Calu3 (cell line): ENCODE measurements at regions of chr6 and their contacts with region 1.

Region 1: GRCh38 chr6:89970609-89971337 is 76.5 kb downstream of the GJA10 start:
- DNase-seq: peak; percentile 64
- H3K4me3 Mint-ChIP-seq: no peak overlapping the region
- H3K27ac Mint-ChIP-seq: no peak overlapping the region
- H3K4me1 Mint-ChIP-seq: peaks cover 2% of the 10 kb centered on the region
- H3K27me3 Mint-ChIP-seq: no peaks in the 10 kb centered on the region
- CTCF ChIP-seq: peak; percentile 25

Region 2: GRCh38 chr6:89098461-89098860 is 872.3 kb before region 1 on chr6:
- CTCF ChIA-PET with region 1: no interaction called
- intact Hi-C with region 1: no loop called
- DNase-seq: no peak
- H3K4me3 Mint-ChIP-seq: no peak overlapping the region
- H3K27ac Mint-ChIP-seq: no peak overlapping the region
- H3K4me1 Mint-ChIP-seq: no peaks in the 10 kb centered on the region
- H3K27me3 Mint-ChIP-seq: no peaks in the 10 kb centered on the region
- CTCF ChIP-seq: no peak

Region 3: GRCh38 chr6:89805814-89806371 is 164.9 kb before region 1 on chr6:
- CTCF ChIA-PET with region 1: no interaction called
- intact Hi-C with region 1: no loop called
- DNase-seq: no peak
- H3K4me3 Mint-ChIP-seq: no peak overlapping the region
- H3K27ac Mint-ChIP-seq: no peak overlapping the region
- H3K4me1 Mint-ChIP-seq: no peaks in the 10 kb centered on the region
- H3K27me3 Mint-ChIP-seq: no peaks in the 10 kb centered on the region
- CTCF ChIP-seq: no peak

Region 4: GRCh38 chr6:90021711-90022110 is 50.9 kb after region 1 on chr6:
- CTCF ChIA-PET with region 1: no interaction called
- intact Hi-C with region 1: no loop called
- DNase-seq: no peak
- H3K4me3 Mint-ChIP-seq: no peak overlapping the region
- H3K27ac Mint-ChIP-seq: no peak overlapping the region
- H3K4me1 Mint-ChIP-seq: peaks cover 12% of the 10 kb centered on the region
- H3K27me3 Mint-ChIP-seq: no peaks in the 10 kb centered on the region
- CTCF ChIP-seq: no peak

Region 5: DNA sequence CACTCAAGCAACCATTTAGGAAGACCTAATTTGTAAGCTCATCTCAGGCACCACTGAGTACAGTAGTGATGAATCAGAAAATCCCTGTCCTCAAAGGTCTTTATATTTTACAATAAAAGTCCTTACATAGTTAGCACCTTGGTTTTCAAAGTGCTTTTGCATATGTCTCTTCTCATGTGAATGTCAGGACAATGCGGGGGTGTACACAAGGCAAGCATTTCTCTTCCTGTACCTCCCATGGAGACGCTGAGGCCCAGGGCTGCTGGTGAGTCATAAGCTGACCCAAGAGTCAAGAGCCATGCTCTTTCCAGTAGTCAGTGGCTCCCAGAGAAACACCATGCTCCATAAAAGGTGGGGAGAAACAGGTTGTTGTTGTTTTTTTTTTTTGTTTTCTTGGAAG is 97.5 kb after region 1 on chr6:
- CTCF ChIA-PET with region 1: no interaction called
- intact Hi-C with region 1: no loop called
- DNase-seq: peak; percentile 34
- H3K4me3 Mint-ChIP-seq: no peak overlapping the region
- H3K27ac Mint-ChIP-seq: no peak overlapping the region
- H3K4me1 Mint-ChIP-seq: peaks cover 14% of the 10 kb centered on the region
- H3K27me3 Mint-ChIP-seq: no peaks in the 10 kb centered on the region
- CTCF ChIP-seq: no peak

Region 6: DNA sequence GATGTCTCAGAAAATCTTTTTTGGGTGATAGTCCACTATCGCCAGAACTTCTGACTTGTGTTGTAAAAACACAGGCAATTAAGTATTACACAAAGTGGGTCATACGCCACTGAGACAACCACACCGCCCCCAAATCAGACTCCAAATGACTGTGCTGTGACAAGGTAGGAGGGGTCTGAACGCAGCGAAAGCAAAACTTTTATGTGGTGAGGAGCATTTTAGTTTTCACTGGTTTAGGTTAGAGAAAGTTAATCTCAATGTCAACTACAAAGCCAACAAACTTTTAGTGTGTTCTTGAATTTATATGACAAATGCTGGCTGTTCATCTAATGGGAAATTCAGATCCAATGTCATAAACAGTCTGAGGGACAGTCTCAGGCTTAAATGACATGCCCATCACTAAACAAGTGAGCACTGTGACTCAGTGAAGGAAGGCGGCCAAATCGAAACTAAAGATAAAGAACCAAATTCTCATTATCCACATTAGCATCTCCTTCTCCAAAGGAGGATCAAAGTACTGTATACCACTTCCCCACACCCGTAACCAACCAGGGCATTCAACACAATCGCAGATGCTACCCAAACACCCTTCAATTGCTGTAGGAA is 110.2 kb after region 1 on chr6:
- CTCF ChIA-PET with region 1: no interaction called
- intact Hi-C with region 1: loop called (anchors 10 kb)
- DNase-seq: no peak
- H3K4me3 Mint-ChIP-seq: no peak overlapping the region
- H3K27ac Mint-ChIP-seq: no peak overlapping the region
- H3K4me1 Mint-ChIP-seq: no peaks in the 10 kb centered on the region
- H3K27me3 Mint-ChIP-seq: no peaks in the 10 kb centered on the region
- CTCF ChIP-seq: no peak

Region 7: GRCh38 chr6:90184334-90185298 is 213.8 kb after region 1 on chr6:
- CTCF ChIA-PET with region 1: no interaction called
- intact Hi-C with region 1: loop called (anchors 2 kb)
- DNase-seq: peak; percentile 77
- H3K4me3 Mint-ChIP-seq: peak overlapping the region; percentile 39
- H3K27ac Mint-ChIP-seq: peak overlapping the region; percentile 83
- H3K4me1 Mint-ChIP-seq: peaks cover 32% of the 10 kb centered on the region
- H3K27me3 Mint-ChIP-seq: no peaks in the 10 kb centered on the region
- CTCF ChIP-seq: no peak

Region 8: DNA sequence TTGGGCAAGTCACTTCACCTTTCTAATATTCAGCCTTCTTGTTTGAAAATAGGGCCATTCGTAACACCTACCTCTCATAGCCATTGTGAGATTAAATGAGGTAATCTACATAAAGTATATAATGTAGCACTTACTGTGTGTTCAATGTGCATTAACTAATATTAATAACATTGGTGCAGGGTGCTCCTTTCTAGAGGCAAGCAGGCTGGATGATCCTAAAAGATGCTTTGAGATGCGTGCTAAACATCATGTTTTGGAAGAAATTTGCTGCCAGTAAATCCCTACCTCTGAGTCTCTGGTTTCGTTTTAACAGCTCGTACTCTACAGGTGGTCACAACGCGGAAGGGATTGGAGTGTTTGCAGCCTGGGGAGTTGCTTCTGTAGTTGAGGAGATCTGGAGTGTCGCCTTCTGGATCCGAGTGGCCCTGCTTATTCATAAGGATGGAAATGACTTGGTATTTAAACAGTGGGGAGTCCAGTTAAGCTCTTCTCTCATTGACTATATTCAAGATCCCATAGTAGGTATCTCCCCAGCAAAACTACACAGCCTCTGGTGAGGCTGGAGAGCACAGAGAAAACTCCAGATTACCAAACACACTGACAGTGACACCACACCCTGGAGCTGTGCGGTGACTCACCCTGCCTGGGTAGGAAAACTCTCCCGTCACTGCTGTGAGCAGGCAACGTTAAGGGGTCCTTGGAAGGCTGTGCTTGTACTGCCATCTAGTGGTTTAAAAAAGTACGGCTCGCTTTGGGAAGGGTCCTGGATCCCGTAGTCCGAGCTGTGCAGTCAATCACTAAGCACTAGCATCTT is 508.2 kb after region 1 on chr6:
- CTCF ChIA-PET with region 1: interaction called, 6 read pairs
- intact Hi-C with region 1: loop called (anchors 1 kb)
- DNase-seq: peak; percentile 89
- H3K4me3 Mint-ChIP-seq: peak overlapping the region; percentile 15
- H3K27ac Mint-ChIP-seq: peak overlapping the region; percentile 70
- H3K4me1 Mint-ChIP-seq: peaks cover 17% of the 10 kb centered on the region
- H3K27me3 Mint-ChIP-seq: no peaks in the 10 kb centered on the region
- CTCF ChIP-seq: peak; percentile 75